Activated CD8-positive, alpha-beta T cell treated with anti-CD3 and anti-CD28 coated beads for 36 hours (primary cell): ENCODE measurements at regions of chr5 and their contacts with region 1.

Region 1: GRCh38 chr5:61277190-61277589 is 54.9 kb upstream of the ZSWIM6 start:
- DNase-seq: peak; percentile 34
- ATAC-seq: peak; percentile 45
- H3K4me3 Mint-ChIP-seq: peak overlapping the region; percentile 12
- H3K27ac Mint-ChIP-seq: peak overlapping the region; percentile 72
- H3K4me1 Mint-ChIP-seq: peaks cover 34% of the 10 kb centered on the region
- H3K27me3 Mint-ChIP-seq: no peaks in the 10 kb centered on the region
- CTCF ChIP-seq: no peak

Region 2: DNA sequence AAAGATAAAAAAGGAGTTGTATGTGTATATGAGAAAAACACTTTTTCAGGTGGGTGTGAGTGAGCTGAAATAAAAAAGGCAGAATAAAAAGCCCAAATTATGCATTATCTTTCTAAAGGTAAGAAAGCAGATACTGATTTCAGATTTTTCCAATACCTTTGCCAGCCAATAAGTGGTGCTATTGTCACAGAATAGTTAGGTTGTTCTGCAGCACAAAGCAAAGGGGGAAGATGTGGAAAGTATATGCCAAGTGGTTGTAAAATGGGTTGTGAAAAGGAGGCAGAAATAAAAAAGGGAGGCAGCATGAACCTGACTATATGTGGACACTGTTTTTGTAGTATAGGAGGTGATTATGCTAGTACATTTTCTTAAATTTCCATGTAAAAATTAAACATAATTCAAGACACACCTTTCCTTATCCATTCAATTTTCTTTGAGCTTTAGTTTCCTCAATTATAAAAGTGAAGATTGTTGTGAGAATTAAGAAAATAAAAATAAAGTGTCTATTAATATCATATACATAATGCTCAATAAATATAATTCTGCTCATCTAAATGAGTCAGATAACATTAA is 221.7 kb before region 1 on chr5:
- CTCF ChIA-PET with region 1: interaction called, 4 read pairs
- POLR2A ChIA-PET with region 1: no interaction called
- intact Hi-C with region 1: loop called (anchors 10 kb)
- DNase-seq: no peak
- ATAC-seq: no peak
- H3K4me3 Mint-ChIP-seq: no peak overlapping the region
- H3K27ac Mint-ChIP-seq: no peak overlapping the region
- H3K4me1 Mint-ChIP-seq: peaks cover 8% of the 10 kb centered on the region
- H3K27me3 Mint-ChIP-seq: no peaks in the 10 kb centered on the region
- CTCF ChIP-seq: peak; percentile 61

Region 3: GRCh38 chr5:61215996-61216395 is 61.2 kb before region 1 on chr5:
- CTCF ChIA-PET with region 1: no interaction called
- POLR2A ChIA-PET with region 1: no interaction called
- intact Hi-C with region 1: no loop called
- DNase-seq: no peak
- ATAC-seq: no peak
- H3K4me3 Mint-ChIP-seq: no peak overlapping the region
- H3K27ac Mint-ChIP-seq: no peak overlapping the region
- H3K4me1 Mint-ChIP-seq: no peaks in the 10 kb centered on the region
- H3K27me3 Mint-ChIP-seq: peaks cover 12% of the 10 kb centered on the region
- CTCF ChIP-seq: no peak